ENCODE measurements at regions of chr3 and their contacts with region 1.

Region 1: GRCh38 chr3:51099794-51100535 is 285.1 kb upstream of the MANF start:
- DNase-seq: peak; percentile 73
- H3K4me3 Mint-ChIP-seq: no peak overlapping the region
- H3K27ac Mint-ChIP-seq: no peak overlapping the region
- H3K4me1 Mint-ChIP-seq: no peaks in the 10 kb centered on the region
- H3K27me3 Mint-ChIP-seq: peaks cover 19% of the 10 kb centered on the region
- CTCF ChIP-seq: peak; percentile 65

Region 2: DNA sequence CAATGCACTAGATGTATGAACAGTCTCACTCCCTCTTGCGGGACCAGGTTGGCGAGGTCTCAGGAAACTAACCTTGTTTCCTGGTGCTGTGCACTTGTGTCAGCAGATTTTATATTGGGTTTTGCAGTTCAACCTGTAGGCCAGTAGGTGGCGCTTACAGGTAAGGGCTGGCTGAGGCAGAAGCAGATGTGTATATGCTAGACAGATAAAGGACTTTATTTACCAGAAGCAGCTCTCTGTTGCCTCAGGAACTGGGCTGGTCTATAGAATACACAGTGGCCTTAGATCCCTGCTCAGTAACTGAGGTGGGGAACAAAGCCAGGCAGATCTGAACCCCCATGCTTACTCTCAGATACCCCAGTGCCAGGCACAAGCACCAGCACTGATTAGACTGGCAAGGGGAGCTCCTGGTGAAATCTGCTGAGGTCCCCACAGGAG is 128.5 kb before region 1 on chr3:
- CTCF ChIA-PET with region 1: interaction called, 7 read pairs
- POLR2A ChIA-PET with region 1: no interaction called
- intact Hi-C with region 1: loop called (anchors 10 kb)
- DNase-seq: peak; percentile 59
- H3K4me3 Mint-ChIP-seq: no peak overlapping the region
- H3K27ac Mint-ChIP-seq: no peak overlapping the region
- H3K4me1 Mint-ChIP-seq: no peaks in the 10 kb centered on the region
- H3K27me3 Mint-ChIP-seq: peaks cover 7% of the 10 kb centered on the region
- CTCF ChIP-seq: peak; percentile 73

Region 3: DNA sequence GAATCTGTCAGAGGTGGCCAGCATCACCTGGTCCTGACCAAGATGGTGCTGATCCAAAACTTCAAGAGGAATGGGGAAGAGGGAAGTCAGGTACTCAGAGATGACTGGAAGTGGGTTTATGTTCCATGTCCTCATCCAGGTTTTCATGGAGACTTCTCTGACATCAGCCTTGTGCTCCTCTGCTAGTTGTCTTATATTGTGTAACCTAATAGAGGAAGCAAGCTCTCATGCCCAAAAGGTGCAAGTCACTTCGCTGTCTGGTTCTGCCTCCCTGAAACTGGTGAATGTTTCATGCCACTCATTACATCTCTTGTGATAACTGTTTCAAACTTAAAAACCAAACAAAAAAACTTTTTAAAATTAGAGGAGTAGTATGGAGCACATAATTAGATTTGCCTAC is 157.9 kb after region 1 on chr3:
- CTCF ChIA-PET with region 1: interaction called, 3 read pairs
- POLR2A ChIA-PET with region 1: no interaction called
- intact Hi-C with region 1: loop called (anchors 5 kb)
- DNase-seq: no peak
- H3K4me3 Mint-ChIP-seq: no peak overlapping the region
- H3K27ac Mint-ChIP-seq: no peak overlapping the region
- H3K4me1 Mint-ChIP-seq: no peaks in the 10 kb centered on the region
- H3K27me3 Mint-ChIP-seq: peaks cover 37% of the 10 kb centered on the region
- CTCF ChIP-seq: no peak

Region 4: DNA sequence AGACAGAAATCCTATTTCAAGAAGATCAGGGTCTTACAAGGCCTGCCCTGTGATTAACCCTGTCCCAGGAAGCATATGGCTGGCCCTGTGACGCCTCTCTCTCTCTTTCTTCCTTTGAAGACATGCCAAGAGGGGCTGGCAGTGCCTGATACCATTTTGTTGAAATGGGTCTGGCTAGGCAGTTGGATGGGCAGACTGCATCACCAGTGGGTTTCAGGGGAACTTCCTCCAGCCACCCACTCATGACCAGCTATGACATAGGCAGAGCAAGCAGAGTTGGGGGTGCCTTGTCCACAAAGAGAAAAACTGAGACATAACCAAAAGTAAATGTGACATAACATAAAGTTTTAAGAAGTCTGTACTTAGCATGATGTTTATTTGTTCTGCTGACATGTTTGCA is 253.7 kb after region 1 on chr3:
- CTCF ChIA-PET with region 1: interaction called, 10 read pairs
- POLR2A ChIA-PET with region 1: no interaction called
- intact Hi-C with region 1: no loop called
- DNase-seq: no peak
- H3K4me3 Mint-ChIP-seq: no peak overlapping the region
- H3K27ac Mint-ChIP-seq: no peak overlapping the region
- H3K4me1 Mint-ChIP-seq: no peaks in the 10 kb centered on the region
- H3K27me3 Mint-ChIP-seq: no peaks in the 10 kb centered on the region
- CTCF ChIP-seq: no peak